ENCODE measurements at regions of chr2 and their contacts with region 1.

Region 1: DNA sequence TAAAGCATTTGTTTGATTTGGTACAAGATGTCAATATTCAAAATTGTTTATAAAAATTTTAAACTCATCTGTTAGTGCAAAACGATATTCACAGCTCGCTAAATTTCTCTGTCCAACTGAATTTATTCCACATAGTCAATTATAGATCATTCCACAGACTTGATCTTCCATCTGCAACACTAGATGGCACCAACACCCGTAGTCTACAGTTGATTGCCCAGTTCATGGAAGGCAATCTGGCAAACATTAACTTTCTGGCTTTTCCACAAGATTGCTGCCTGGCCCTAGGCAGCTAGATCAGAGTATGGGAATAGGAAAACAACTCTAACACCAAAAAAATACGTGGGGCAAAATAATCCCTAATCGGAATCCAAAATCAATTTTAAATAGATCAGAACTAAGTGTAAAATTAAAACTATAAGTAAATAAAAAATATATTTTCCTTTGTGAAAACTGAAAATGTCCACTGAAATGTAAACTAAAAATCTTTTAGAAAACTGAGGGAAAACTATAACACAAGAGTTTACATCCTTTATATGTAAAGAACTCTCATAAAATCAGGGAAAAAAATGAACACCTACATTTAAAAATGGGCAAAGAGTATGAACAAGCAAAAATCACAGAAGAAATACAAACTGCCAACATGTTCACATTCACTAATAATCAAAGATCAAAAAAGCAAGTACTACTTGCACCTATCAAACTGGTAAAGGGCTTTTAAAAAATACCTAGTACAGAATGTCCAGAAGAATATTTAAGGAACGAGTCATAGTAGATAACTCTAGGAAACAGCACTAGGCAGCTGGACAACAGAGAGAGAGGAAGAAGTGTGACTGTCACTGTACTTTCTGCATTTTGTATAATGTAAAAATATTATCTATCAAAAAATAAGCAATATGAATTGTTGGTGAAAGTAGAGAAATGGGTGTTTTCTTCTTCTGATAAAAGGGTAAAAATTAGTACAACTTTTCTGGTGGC is 35.0 kb downstream of the RTN4 start:
- DNase-seq: peak; percentile 55
- H3K4me3 ChIP-seq: no peak overlapping the region; a peak in 1 of 4 replicates
- H3K27ac ChIP-seq: peak overlapping the region; percentile 14 to 53
- H3K4me1 ChIP-seq: peaks cover 6 to 58% of the 10 kb centered on the region in 2 experiments; a peak in 3 of 4 replicates
- H3K27me3 ChIP-seq: no peaks in the 10 kb centered on the region
- CTCF ChIP-seq: peak; percentile 68
- EP300 ChIP-seq: no peak
- RAD21 ChIP-seq: peak; percentile 93

Region 2: DNA sequence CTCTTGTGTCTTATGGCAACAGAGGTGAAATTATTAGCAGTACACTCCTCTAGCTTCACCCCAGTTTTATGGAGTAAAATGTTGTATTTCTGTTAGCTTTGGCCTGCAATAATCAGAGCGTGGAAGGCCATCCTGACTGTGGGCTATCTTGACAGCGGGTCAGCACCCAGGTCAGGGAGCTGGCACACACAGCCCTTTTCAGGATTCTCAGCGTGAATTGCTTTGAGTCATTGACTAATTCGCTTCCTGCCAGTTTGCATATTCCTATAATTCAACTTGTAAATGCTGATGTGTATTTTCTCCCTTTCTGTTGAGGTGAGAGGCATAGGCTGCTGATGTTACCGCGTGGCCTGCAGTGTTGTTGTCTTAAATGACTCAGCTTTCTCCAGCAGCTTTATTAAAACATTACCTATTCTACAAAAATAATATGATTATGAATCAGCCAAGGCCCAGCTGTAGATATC is 401.4 kb before region 1 on chr2:
- CTCF ChIA-PET with region 1: no interaction called
- POLR2A ChIA-PET with region 1: no interaction called
- DNase-seq: no peak
- H3K4me3 ChIP-seq: no peak overlapping the region
- H3K27ac ChIP-seq: peak overlapping the region in 1 of 2 experiments; percentile 59; a peak in 3 of 4 replicates
- H3K4me1 ChIP-seq: peaks cover 18 to 26% of the 10 kb centered on the region in 2 experiments
- H3K27me3 ChIP-seq: no peaks in the 10 kb centered on the region
- CTCF ChIP-seq: no peak
- EP300 ChIP-seq: no peak
- RAD21 ChIP-seq: no peak

Region 3: GRCh38 chr2:55026202-55026601 is 11.0 kb after region 1 on chr2:
- CTCF ChIA-PET with region 1: interaction called, 10 read pairs
- POLR2A ChIA-PET with region 1: no interaction called
- DNase-seq: no peak
- H3K4me3 ChIP-seq: no peak overlapping the region
- H3K27ac ChIP-seq: no peak overlapping the region; a peak in 1 of 4 replicates
- H3K4me1 ChIP-seq: peaks cover 2 to 29% of the 10 kb centered on the region in 2 experiments; a peak in 3 of 4 replicates
- H3K27me3 ChIP-seq: no peaks in the 10 kb centered on the region
- CTCF ChIP-seq: no peak
- EP300 ChIP-seq: no peak
- RAD21 ChIP-seq: no peak

Region 4: DNA sequence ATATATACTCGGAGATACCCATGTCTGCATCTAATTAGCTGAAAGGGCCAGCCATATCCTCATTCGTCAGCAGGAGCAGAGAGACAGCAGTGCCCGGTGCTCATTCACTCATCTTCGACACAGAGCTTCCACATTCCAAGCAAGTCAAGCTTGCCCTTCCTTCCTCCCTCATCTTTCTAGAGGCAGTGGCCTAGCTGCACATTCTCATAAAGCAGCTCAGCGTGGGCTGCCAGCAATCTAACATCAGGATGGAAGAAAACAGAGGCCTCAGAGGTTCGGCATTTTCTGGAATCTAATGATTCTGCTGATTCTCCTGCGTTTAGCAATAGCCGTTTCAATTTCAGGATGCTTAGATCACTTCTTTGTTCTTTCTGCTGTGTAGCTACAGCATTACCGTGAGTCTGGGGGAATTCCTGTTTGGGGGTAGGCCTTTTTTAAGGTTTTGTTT is 148.0 kb after region 1 on chr2:
- CTCF ChIA-PET with region 1: interaction called, 215 read pairs
- POLR2A ChIA-PET with region 1: no interaction called
- DNase-seq: peak; percentile 42
- H3K4me3 ChIP-seq: peak overlapping the region in 1 of 2 experiments; percentile 21; a peak in 1 of 4 replicates
- H3K27ac ChIP-seq: peak overlapping the region; percentile 79 to 94
- H3K4me1 ChIP-seq: peaks cover 33 to 41% of the 10 kb centered on the region in 2 experiments
- H3K27me3 ChIP-seq: no peaks in the 10 kb centered on the region
- CTCF ChIP-seq: no peak
- EP300 ChIP-seq: peak in 1 of 2 experiments; percentile 6; a peak in 1 of 4 replicates
- RAD21 ChIP-seq: no peak

Measured in SK-N-SH (cell line).